Common myeloid progenitor, CD34-positive (primary cell): ENCODE measurements at regions of chr13 and their contacts with region 1.

Region 1: GRCh38 chr13:112616586-112617362 is 28.8 kb upstream of the TUBGCP3 start:
- DNase-seq: peak; percentile 34 to 53 (median 47)
- H3K4me3 ChIP-seq: no peak overlapping the region
- H3K27ac ChIP-seq: no peak overlapping the region
- H3K4me1 ChIP-seq: no peaks in the 10 kb centered on the region
- H3K27me3 ChIP-seq: peaks cover 0 to 14% (median 6%) of the 10 kb centered on the region in 5 experiments

Region 2: GRCh38 chr13:112606109-112607001 is 10.4 kb before region 1 on chr13:
- CTCF ChIA-PET with region 1: interaction called, 17 read pairs
- POLR2A ChIA-PET with region 1: no interaction called
- DNase-seq: peak; percentile 85 to 87 (median 87)
- H3K4me3 ChIP-seq: peak overlapping the region in 6 of 7 experiments; percentile 68 to 90 (median 79)
- H3K27ac ChIP-seq: no peak overlapping the region
- H3K4me1 ChIP-seq: peaks cover 0 to 8% (median 6%) of the 10 kb centered on the region in 4 experiments
- H3K27me3 ChIP-seq: peaks cover 0 to 6% (median 3%) of the 10 kb centered on the region in 5 experiments